Right ventricle myocardium inferior (tissue), 1 donor: ENCODE measurements at regions of chr4 and their contacts with region 1.

Region 1: GRCh38 chr4:40916880-40917279 is 167.1 kb downstream of the NSUN7 start:
- DNase-seq: no peak
- ATAC-seq: peak; percentile 55

Region 2: GRCh38 chr4:40486534-40486933 is 430.3 kb before region 1 on chr4:
- intact Hi-C with region 1: no loop called
- DNase-seq: no peak
- ATAC-seq: peak; percentile 44

Region 3: DNA sequence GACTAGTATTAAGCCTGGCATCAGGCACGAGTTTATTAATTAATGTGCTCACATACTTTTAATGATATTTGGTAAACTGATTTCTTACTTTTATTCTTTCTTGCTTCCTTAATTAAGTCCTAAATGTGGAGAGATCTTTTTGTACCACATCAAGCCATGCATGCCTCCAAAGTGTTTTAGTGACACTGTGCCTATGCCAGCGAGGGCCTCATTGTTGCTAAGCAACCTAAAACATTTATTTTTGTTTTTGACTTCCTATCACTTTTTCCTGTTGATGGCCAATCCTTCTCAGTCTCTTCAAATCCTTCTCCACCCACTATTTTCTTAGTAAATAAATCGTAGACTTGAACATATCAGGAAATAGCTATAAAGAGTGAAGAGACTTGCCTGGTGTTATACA is 172.7 kb before region 1 on chr4:
- intact Hi-C with region 1: loop called (anchors 5 kb)
- DNase-seq: no peak
- ATAC-seq: peak; percentile 68

Region 4: DNA sequence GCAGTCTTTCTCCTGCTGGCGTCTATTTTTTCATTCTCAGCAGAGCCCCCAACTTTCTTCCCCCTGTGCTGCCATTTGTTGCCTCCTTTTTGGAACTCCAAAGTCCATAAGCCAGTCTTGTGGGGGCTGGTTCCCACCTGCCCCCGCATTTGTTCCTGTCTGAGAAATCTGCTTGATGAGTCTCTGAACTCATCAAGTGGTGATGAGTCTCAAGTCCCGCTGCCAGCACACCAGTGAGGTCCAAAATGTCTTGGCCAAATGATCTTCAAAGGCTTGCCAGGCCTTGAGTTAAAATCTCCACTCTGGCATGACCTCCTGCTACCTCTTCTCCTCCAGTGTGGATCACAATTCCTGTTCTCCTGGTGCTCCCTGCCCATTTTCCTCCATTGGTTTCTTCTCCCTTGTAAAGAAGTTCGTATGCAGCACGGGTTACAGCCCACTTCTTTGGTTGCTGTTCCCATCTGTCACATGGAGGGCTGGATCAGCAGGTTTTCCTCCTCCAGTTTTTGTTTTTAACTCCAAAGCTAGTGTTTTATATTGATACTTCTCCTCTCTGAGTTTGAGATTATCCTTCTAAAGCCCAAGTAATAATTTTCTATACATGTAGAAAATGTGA is 548.4 kb after region 1 on chr4:
- intact Hi-C with region 1: no loop called
- DNase-seq: no peak
- ATAC-seq: no peak